Naive thymus-derived CD8-positive, alpha-beta T cell (primary cell): ENCODE measurements at regions of chr22 and their contacts with region 1.

Region 1: GRCh38 chr22:39598017-39598965 is 27.7 kb downstream of the CACNA1I start:
- DNase-seq: peak; percentile 35 to 86 (median 62)
- ATAC-seq: peak; percentile 76 to 82
- H3K4me3 Mint-ChIP-seq: peak overlapping the region; percentile 28 to 75 (median 55)
- H3K27ac Mint-ChIP-seq: peak overlapping the region in 3 of 10 donors; percentile 45 to 72 (median 52)
- H3K4me1 Mint-ChIP-seq: peaks cover 24 to 45% (median 36%) of the 10 kb centered on the region in 4 donors
- H3K27me3 Mint-ChIP-seq: peaks cover 0 to 26% (median 12%) of the 10 kb centered on the region in 5 donors

Region 2: GRCh38 chr22:39618996-39619530 is 20.8 kb after region 1 on chr22:
- POLR2A ChIA-PET with region 1: interaction called, 10 read pairs
- DNase-seq: no peak
- ATAC-seq: no peak
- H3K4me3 Mint-ChIP-seq: no peak overlapping the region
- H3K27ac Mint-ChIP-seq: peak overlapping the region in 1 of 10 donors; percentile 39
- H3K4me1 Mint-ChIP-seq: peaks cover 13 to 17% (median 15%) of the 10 kb centered on the region in 4 donors
- H3K27me3 Mint-ChIP-seq: peaks cover 6 to 28% (median 18%) of the 10 kb centered on the region in 5 donors